PC-3 (cell line): ENCODE measurements at regions of chr13 and their contacts with region 1.

Region 1: GRCh38 chr13:100633461-100633860 is 41.1 kb downstream of the TMTC4 start:
- DNase-seq: peak; percentile 88
- ATAC-seq: peak; percentile 99
- H3K4me3 ChIP-seq: no peak overlapping the region
- H3K27ac ChIP-seq: peak overlapping the region; percentile 69
- H3K4me1 ChIP-seq: peaks cover 8% of the 10 kb centered on the region; the same call in 1 of the 2 replicates
- H3K27me3 ChIP-seq: no peaks in the 10 kb centered on the region
- CTCF ChIP-seq: no peak

Region 2: DNA sequence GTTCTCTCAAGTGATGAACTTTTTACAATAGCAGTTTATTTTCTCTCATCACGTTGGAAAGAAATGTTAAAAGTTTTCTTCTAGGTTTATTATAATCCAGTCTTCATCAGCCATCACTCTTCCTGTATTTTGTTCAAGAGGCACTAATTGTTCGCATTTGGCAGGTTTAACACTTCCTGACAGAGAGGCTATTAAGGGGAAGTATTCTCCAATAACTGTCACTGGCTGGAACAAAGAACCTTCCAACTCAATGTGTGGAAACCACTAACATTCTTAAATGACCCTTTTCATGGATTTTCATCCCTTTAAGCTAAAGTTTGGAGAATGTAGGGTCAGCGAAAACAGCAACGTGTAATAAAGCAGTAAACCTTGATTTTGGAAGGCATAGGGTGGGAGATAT is 399.5 kb before region 1 on chr13:
- CTCF ChIA-PET with region 1: no interaction called
- POLR2A ChIA-PET with region 1: no interaction called
- intact Hi-C with region 1: no loop called
- DNase-seq: no peak
- ATAC-seq: no peak
- H3K4me3 ChIP-seq: no peak overlapping the region
- H3K27ac ChIP-seq: no peak overlapping the region
- H3K4me1 ChIP-seq: no peaks in the 10 kb centered on the region; the same call in 1 of the 2 replicates
- H3K27me3 ChIP-seq: no peaks in the 10 kb centered on the region
- CTCF ChIP-seq: no peak

Region 3: DNA sequence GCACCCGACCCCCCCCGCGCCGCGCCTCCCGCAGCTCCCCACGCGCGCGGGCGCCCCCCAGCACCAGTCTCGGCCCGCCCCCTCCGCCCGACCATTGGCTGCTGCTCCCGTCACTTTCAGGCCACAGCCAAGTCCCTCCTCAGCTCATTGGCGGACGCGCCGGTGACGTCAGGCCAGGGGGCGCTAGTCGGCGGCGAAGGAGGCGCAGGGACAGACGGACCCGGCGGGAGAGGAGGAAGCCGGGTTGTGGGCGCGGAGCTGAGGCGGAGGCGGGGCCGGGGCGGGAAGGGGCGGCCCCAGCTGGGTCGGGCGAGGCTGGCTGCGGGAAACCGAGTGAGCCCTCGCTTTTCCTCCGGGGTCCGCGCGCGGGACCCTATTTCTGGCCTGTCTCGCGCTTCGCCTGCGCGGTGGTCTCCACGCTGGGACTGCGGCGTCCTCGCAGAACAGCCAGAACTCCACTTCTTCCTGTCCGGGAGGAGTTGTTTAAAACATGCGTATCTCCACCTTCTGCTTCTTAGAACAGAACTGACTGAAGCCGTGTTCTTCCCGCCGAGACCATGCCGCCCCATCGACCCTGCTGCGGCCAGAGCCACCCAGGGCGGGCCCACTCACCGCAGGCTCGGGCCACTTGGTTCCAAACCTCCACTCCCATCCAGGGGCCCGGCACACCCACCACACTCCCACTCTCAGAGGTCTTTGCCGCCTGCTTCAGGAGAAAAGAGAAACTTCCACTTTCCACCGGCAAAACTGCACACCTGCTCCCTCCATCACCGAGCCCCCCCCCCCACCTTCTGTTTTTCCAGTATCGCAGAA is 41.6 kb after region 1 on chr13:
- CTCF ChIA-PET with region 1: no interaction called
- POLR2A ChIA-PET with region 1: no interaction called
- intact Hi-C with region 1: loop called (anchors 1 kb)
- DNase-seq: peak; percentile 94
- ATAC-seq: peak; percentile 91
- H3K4me3 ChIP-seq: peak overlapping the region; percentile 73
- H3K27ac ChIP-seq: no peak overlapping the region
- H3K4me1 ChIP-seq: peaks cover 16% of the 10 kb centered on the region; the same call in 1 of the 2 replicates
- H3K27me3 ChIP-seq: no peaks in the 10 kb centered on the region
- CTCF ChIP-seq: peak; percentile 17; the same call in 1 of the 2 replicates